Left cardiac atrium (tissue), 4 donors: ENCODE measurements at regions of chr12 and their contacts with region 1.

Region 1: DNA sequence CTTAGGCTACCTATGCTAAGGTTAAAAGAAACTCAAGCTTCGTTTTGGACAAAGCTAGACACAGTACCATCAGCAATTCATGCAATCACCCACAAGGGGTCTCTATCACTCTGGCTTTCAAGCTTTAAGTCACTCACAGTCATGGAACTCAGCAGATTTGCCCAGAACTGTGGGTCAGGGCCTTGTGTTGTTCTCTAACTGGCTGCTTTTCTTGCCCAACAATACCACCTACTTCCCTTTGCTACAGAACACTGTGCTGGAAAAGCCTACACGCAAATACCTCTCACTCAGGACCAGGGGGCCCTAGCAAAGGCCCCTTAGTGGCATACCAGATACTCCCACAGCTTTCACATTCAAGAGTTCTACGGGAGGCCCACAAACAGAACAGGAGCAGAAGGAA is 9.1 kb downstream of the NEMP1 start:
- DNase-seq: peak; percentile 54
- ATAC-seq: peak; percentile 94 to 95

Region 2: GRCh38 chr12:57001448-57001906 is 68.0 kb before region 1 on chr12:
- intact Hi-C with region 1: no loop called
- DNase-seq: peak; percentile 78
- ATAC-seq: peak; percentile 43 to 57

Region 3: DNA sequence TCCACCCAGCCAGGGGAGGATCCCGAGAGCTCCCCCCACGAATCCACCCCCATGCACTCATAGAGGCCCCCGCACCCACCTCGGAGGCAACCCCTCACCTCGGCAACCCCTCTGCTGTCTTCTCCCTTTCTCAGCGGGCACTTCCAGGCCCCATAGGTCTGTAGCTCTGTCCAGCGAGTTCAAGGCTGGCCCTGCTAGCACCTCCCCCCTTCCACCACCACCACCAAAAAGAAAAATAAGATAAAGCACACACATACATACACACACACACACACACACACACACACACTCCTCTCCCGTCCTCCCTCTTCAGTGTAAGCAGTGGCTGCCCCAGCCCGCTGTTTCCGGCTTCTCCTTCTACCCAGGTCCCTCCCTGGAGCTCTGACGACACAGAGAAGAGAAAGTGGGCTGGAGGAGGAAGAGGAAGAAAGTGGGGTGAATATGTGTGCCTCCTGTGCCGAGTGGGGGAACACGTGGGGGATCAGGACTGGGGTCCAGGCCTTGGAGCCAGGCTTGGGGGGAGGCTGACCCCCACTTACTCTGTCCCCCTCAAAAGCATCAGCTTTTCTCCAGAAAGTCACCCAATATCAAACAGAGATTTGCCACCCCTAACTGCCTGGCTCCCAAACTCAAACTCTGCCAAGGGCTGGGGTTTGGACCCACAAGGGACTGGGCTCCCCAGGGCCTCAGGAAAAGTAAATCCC is 41.7 kb after region 1 on chr12 and contains the start of gene STAT6:
- intact Hi-C with region 1: loop called (anchors 1 to 2 kb)
- DNase-seq: peak; percentile 90
- ATAC-seq: peak; percentile 81 to 85
- total RNA-seq, gene STAT6: 77.7 to 78.1 TPM

Region 4: GRCh38 chr12:57124259-57124877 is 54.8 kb after region 1 on chr12:
- intact Hi-C with region 1: no loop called
- DNase-seq: peak; percentile 75
- ATAC-seq: peak in 1 of 2 donors; percentile 10

Region 5: DNA sequence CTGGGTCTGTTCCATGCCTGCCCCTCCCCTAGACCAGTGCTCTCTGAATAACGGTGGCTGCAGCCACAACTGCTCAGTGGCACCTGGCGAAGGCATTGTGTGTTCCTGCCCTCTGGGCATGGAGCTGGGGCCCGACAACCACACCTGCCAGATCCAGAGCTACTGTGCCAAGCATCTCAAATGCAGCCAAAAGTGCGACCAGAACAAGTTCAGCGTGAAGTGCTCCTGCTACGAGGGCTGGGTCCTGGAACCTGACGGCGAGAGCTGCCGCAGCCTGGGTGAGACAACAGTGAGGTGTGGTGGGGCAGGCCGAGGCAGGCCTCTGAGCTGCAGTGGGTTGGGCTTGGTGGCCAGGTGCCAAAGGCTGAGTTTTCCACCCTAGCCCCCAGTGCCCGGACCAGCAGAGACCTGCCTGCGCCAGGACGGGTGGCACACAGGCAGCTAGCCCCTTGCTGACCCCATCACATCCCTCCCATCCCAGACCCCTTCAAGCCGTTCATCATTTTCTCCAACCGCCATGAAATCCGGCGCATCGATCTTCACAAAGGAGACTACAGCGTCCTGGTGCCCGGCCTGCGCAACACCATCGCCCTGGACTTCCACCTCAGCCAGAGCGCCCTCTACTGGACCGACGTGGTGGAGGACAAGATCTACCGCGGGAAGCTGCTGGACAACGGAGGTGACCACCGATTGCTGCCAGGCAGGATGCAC is 106.1 kb after region 1 on chr12:
- intact Hi-C with region 1: loop called (anchors 5 to 10 kb)
- DNase-seq: peak; percentile 83
- ATAC-seq: peak; percentile 38 to 56

Region 6: DNA sequence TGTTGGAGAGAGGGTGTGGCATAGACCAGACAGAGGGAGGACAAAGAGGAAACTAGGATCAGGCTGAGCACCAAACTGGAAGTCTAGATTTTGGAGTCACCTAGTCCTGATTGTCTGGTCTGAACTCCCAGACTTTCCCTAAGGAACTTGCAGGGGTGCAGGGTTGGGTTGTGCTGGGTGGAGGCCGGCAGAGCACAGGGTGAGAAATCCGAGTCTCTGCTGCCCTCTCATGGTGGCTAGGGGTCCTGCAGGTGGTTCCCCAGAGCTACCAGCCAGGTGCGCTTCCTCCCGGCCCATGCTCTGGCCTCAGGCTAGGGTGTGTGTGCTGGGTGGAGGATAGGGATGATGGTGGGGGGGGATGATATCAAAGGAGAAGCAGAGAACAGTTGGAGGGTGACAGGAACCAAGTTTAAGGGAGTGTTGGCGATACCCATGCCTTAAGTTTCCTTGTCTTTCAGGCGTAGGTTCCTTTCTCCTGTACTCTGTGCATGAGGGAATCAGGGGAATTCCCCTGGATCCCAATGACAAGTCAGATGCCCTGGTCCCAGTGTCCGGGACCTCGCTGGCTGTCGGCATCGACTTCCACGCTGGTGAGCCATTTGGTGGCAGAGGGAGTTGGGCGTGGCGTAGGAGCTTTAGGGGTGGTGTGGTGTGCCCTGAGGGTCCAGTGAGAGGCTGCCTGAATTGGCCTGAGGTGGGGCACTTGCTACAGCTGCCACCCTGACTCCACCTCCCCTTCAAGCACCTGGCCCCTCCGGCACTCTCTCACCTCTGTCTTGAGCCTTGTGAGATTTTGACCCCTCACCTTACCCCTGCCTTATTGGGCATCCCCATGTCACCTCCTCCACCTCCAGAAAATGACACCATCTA is 113.6 kb after region 1 on chr12:
- intact Hi-C with region 1: loop called (anchors 5 to 10 kb)
- DNase-seq: peak; percentile 70
- ATAC-seq: peak; percentile 75 to 83